H1 (cell line): ENCODE measurements at regions of chr3 and their contacts with region 1.

Region 1: GRCh38 chr3:150183678-150184425 is 213.2 kb upstream of the PFN2 start:
- DNase-seq: peak; percentile 27 to 74
- H3K4me3 ChIP-seq: peak overlapping the region in 3 of 4 experiments; percentile 26 to 58 (median 27); a peak in 5 of 8 replicates
- H3K27ac ChIP-seq: no peak overlapping the region
- H3K4me1 ChIP-seq: peaks cover 0 to 6% (median 0%) of the 10 kb centered on the region in 4 experiments; a peak in 1 of 7 replicates
- H3K27me3 ChIP-seq: 0 out of 7 replicates have a peak, but pooled peaks cover 0 to 2% (median 0%) of the 10 kb centered on the region in 4 experiments
- CTCF ChIP-seq: peak; percentile 49 to 83 (median 79)
- EP300 ChIP-seq: no peak
- POLR2A ChIP-seq: no peak
- RAD21 ChIP-seq: peak; percentile 92 to 93

Region 2: DNA sequence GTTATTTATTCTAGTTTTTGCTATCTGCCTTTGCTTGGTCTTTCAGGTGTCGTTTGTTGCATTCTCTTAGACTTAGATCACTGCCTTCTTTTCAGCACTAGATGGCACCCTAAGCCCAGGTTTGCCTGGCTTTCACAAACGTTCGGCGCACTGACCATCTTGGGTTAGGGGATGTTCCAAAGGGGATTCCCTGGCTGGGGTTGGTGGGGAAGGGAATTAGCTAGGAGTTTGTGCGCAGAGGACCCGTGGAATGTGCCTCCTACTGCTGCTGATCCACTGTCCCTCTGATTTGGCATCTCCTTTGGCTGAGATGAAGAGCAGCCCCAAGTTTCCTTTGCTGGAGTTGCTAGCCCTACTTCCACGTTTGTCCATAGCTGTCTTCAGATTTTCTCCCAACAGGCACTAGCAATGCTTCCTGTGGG is 247.0 kb before region 1 on chr3:
- CTCF ChIA-PET with region 1: interaction called, 29 read pairs
- POLR2A ChIA-PET with region 1: interaction called, 3 read pairs
- DNase-seq: peak; percentile 50 to 63
- H3K4me3 ChIP-seq: no peak overlapping the region
- H3K27ac ChIP-seq: no peak overlapping the region
- H3K4me1 ChIP-seq: no peaks in the 10 kb centered on the region
- H3K27me3 ChIP-seq: no peaks in the 10 kb centered on the region
- CTCF ChIP-seq: peak; percentile 45 to 86 (median 83)
- EP300 ChIP-seq: no peak
- POLR2A ChIP-seq: no peak
- RAD21 ChIP-seq: peak; percentile 98

Region 3: DNA sequence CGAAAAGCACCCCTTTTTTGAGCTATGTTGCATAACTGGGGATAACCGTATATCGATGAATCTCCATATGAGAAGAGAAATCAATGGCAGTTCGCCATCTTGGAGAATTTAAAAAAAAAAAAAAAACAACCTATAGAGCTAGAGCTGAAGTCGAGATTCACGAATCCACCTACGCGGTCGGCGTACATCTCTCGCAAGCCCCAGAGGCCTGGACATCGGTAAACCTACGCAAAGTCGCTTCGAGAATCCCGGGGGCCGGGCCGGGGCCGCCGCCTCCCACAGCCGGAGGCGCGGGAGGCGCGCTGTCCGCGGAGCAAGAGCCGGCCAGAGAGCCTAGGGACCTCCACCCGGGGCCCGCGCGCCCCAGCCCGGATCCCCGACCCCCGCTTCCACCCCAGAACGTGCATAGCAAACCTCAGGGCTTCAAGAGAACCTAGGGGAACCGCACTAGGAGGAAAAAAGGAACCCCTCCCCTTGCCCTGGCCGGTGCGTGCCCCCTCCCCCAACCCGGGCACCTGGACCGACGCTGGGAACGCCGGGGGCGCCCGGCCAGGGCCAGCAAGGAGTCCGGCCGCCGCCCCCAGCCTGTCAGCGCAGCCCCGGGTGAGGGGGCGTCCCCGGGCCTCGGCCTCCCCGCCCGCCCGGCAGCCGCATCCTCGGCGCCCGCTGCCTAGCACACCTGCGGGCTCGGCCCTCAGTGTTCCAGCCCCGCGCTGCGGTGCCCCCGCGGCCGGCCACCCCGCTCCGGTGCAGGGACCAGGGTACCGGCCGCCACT is 213.7 kb before region 1 on chr3:
- CTCF ChIA-PET with region 1: interaction called, 41 read pairs
- POLR2A ChIA-PET with region 1: interaction called, 14 read pairs
- DNase-seq: peak in 1 of 2 experiments; percentile 83
- H3K4me3 ChIP-seq: peak overlapping the region; percentile 79 to 92 (median 88)
- H3K27ac ChIP-seq: peak overlapping the region; percentile 95
- H3K4me1 ChIP-seq: peaks cover 0 to 12% (median 3%) of the 10 kb centered on the region in 4 experiments; a peak in 4 of 7 replicates
- H3K27me3 ChIP-seq: no peaks in the 10 kb centered on the region
- CTCF ChIP-seq: no peak
- EP300 ChIP-seq: no peak
- POLR2A ChIP-seq: peak; percentile 39 to 68
- RAD21 ChIP-seq: no peak

Region 4: GRCh38 chr3:150055332-150055731 is 128.5 kb before region 1 on chr3:
- CTCF ChIA-PET with region 1: interaction called, 11 read pairs
- POLR2A ChIA-PET with region 1: no interaction called
- DNase-seq: no peak
- H3K4me3 ChIP-seq: no peak overlapping the region
- H3K27ac ChIP-seq: no peak overlapping the region
- H3K4me1 ChIP-seq: peaks cover 0 to 5% (median 1%) of the 10 kb centered on the region in 4 experiments; a peak in 3 of 7 replicates
- H3K27me3 ChIP-seq: no peaks in the 10 kb centered on the region
- CTCF ChIP-seq: no peak
- EP300 ChIP-seq: no peak
- POLR2A ChIP-seq: no peak
- RAD21 ChIP-seq: no peak

Region 5: GRCh38 chr3:150158943-150159625 is 24.8 kb before region 1 on chr3:
- CTCF ChIA-PET with region 1: interaction called, 12 read pairs
- POLR2A ChIA-PET with region 1: no interaction called
- DNase-seq: no peak
- H3K4me3 ChIP-seq: no peak overlapping the region
- H3K27ac ChIP-seq: no peak overlapping the region
- H3K4me1 ChIP-seq: no peaks in the 10 kb centered on the region
- H3K27me3 ChIP-seq: no peaks in the 10 kb centered on the region
- CTCF ChIP-seq: no peak
- EP300 ChIP-seq: no peak
- POLR2A ChIP-seq: no peak
- RAD21 ChIP-seq: no peak